ENCODE measurements at regions of chr16 and their contacts with region 1.

Region 1: GRCh38 chr16:88662843-88663606 is at the start of gene MVD:
- DNase-seq: peak; percentile 93 to 98
- H3K4me3 ChIP-seq: peak within 1 kb of the TSS; percentile 87 to 89
- H3K27ac ChIP-seq: peak within 1 kb of the TSS; percentile 68 to 72
- H3K4me1 ChIP-seq: peaks cover 0 to 11% of the 10 kb centered on the region in 2 donors
- H3K27me3 ChIP-seq: no peaks in the 10 kb centered on the region
- CTCF ChIP-seq: no peak
- total RNA-seq, gene MVD: 72.9 TPM

Region 2: GRCh38 chr16:88452482-88453216 is 210.4 kb before region 1 on chr16:
- intact Hi-C with region 1: loop called (anchors 5 kb)
- DNase-seq: peak; percentile 84 to 98
- H3K4me3 ChIP-seq: peak overlapping the region; percentile 75 to 84
- H3K27ac ChIP-seq: peak overlapping the region; percentile 56 to 58
- H3K4me1 ChIP-seq: peaks cover 7 to 24% of the 10 kb centered on the region in 2 donors
- H3K27me3 ChIP-seq: no peaks in the 10 kb centered on the region
- CTCF ChIP-seq: no peak

Region 3: DNA sequence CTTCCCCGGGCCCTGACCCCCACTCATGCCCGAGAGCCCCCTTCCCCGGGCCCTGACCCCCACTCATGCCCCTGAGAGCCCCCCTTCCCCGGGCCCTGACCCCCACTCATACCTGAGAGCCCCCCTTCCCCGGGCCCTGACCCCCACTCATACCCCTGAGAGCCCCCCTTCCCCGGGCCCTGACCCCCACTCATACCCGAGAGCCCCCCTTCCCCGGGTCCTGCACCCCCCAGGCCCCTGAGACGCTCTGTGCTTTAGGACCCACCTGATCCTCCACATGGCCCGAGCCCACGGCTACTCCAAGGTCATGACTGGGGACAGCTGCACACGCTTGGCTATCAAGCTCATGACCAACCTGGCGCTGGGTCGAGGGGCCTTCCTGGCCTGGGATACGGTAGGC is 50.0 kb after region 1 on chr16:
- intact Hi-C with region 1: no loop called
- DNase-seq: no peak
- H3K4me3 ChIP-seq: no peak overlapping the region
- H3K27ac ChIP-seq: no peak overlapping the region
- H3K4me1 ChIP-seq: no peaks in the 10 kb centered on the region
- H3K27me3 ChIP-seq: no peaks in the 10 kb centered on the region
- CTCF ChIP-seq: no peak

Region 4: GRCh38 chr16:88811769-88812512 is 148.9 kb after region 1 on chr16 and contains the start of gene APRT:
- intact Hi-C with region 1: loop called (anchors 5 kb)
- DNase-seq: peak; percentile 65 to 96
- H3K4me3 ChIP-seq: peak within 1 kb of the TSS; percentile 80 to 83
- H3K27ac ChIP-seq: peak within 1 kb of the TSS; percentile 86 to 93
- H3K4me1 ChIP-seq: peaks cover 8 to 21% of the 10 kb centered on the region in 2 donors
- H3K27me3 ChIP-seq: no peaks in the 10 kb centered on the region
- CTCF ChIP-seq: peak in 2 of 3 experiments; percentile 41 to 44
- total RNA-seq, gene APRT: 305 TPM

Region 5: DNA sequence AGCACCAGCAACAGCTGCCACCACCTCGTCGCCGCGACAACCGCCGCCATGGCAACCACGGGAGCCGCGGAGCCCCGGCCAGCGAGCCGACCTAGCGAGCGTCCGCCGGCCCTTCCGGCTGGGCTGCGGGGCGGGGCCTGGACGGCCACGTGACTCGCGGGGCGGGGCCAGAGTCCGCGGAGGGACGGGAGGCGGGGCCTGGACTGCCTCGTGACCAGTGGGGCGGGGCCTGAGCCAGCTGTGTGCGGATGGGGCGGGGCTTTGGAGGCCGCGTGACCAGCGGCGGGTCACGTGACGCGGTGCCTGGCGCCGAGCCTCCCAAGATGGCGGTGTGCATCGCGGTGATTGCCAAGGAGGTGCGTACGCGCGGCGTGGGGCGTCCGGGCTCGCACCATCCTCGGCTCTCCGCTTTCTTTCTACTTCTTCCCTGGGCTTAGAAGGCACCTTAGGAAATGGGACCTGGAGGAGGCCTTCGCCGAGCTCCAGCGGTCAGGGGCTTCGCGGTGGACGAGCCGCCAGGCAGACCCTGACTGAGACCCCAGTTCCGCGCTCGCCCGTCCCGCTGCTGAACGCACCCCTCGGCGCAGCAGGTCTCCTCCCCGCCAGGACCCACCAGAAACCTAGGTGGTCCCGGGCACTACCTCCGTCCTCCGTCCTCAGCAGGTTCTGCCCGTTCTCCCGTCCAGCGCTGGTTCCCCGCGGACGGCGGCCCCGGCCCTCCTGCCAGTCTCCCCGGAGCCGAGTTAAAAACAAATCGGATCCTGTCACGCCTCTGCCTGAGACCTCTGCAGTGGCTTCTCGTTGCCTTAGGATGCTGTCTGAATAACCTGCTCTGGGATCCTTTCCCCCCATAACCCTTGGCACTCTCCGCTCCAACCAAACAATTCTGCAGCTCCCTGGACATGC is 194.1 kb after region 1 on chr16 and contains the starts of genes GALNS and TRAPPC2L:
- intact Hi-C with region 1: loop called (anchors 5 kb)
- DNase-seq: peak; percentile 92 to 99
- H3K4me3 ChIP-seq: peak within 1 kb of the TSS; percentile 64 to 87
- H3K27ac ChIP-seq: peak within 1 kb of the TSS; percentile 54 to 66
- H3K4me1 ChIP-seq: peaks cover 13 to 14% of the 10 kb centered on the region in 2 donors
- H3K27me3 ChIP-seq: no peaks in the 10 kb centered on the region
- CTCF ChIP-seq: no peak
- total RNA-seq, gene GALNS: 62.2 TPM
- total RNA-seq, gene TRAPPC2L: 7.6 TPM

Region 6: GRCh38 chr16:89700100-89700648 is 1037.1 kb after region 1 on chr16:
- intact Hi-C with region 1: loop called (anchors 2 kb)
- DNase-seq: peak; percentile 96 to 99
- H3K4me3 ChIP-seq: peak overlapping the region; percentile 76 to 77
- H3K27ac ChIP-seq: peak overlapping the region; percentile 88 to 93
- H3K4me1 ChIP-seq: peaks cover 7 to 20% of the 10 kb centered on the region in 2 donors
- H3K27me3 ChIP-seq: no peaks in the 10 kb centered on the region
- CTCF ChIP-seq: peak; percentile 59 to 83 (median 63)